ENCODE measurements at regions of chr2 and their contacts with region 1.

Region 1: DNA sequence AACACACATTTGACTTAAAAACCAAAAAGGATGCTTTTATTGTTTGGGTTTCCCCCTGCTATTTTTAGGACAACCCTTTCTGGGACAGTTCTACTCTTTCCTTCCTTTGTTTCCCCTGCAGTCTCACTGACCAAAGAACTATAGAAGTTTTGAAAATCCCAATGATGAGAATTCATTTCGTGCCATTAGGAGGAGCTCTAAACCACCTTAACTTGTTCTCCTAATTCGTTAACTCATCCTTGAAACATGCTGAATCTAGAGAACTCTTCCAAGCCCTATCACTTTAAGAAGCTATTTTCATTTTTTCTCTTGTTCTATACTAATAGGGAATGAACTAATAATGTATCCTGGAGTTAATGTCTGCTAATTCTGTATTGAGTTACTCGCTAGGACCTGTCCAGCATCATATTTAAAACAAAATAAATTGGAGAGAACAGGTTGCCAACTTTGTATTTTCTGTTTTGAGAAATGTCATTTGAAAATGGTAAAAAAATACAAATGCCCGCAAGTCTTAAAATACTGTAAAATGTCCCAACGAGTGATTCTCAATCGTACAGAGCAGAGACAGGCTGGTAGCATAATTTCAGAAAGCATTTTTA is 62.9 kb downstream of the AFTPH start:
- DNase-seq: no peak
- ATAC-seq: peak; percentile 30
- H3K4me3 ChIP-seq: no peak overlapping the region
- H3K27ac ChIP-seq: no peak overlapping the region
- H3K4me1 ChIP-seq: peaks cover 40% of the 10 kb centered on the region
- H3K27me3 ChIP-seq: no peaks in the 10 kb centered on the region
- CTCF ChIP-seq: peak; percentile 54 to 77 (median 63)
- EP300 ChIP-seq: no peak
- POLR2A ChIP-seq: no peak
- RAD21 ChIP-seq: peak; percentile 83

Region 2: GRCh38 chr2:64533882-64534281 is 53.1 kb before region 1 on chr2:
- CTCF ChIA-PET with region 1: interaction called, 12 read pairs
- POLR2A ChIA-PET with region 1: interaction called, 5 read pairs
- RAD21 ChIA-PET with region 1: interaction called, 16 read pairs
- SMC1A ChIA-PET with region 1: interaction called, 9 read pairs
- in situ Hi-C with region 1: no loop called
- intact Hi-C with region 1: no loop called
- DNase-seq: no peak
- ATAC-seq: peak; percentile 13
- H3K4me3 ChIP-seq: peak overlapping the region; percentile 38; the same call in 1 of the 2 replicates
- H3K27ac ChIP-seq: peak overlapping the region; percentile 17; the same call in 1 of the 2 replicates
- H3K4me1 ChIP-seq: peaks cover 35% of the 10 kb centered on the region
- H3K27me3 ChIP-seq: no peaks in the 10 kb centered on the region
- CTCF ChIP-seq: no peak
- EP300 ChIP-seq: no peak
- POLR2A ChIP-seq: no peak
- RAD21 ChIP-seq: no peak

Region 3: DNA sequence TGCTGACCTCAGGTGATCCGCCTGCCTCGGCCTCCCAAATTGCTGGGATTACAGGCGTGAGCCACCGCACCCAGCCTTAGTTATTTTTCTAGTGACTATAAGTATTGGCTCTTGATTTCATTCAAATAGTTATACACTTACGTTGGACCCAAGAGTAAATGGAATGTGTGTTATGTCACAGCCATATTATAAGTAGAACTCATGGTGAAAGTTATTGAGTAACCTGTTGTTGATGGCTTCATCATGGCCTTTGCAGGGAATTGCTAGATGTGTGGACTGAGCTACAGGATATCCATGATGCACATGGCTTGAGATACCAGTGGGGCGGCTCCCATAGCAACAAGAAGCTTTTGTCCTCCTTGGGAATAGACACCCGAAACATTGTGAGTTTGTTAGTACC is 18.1 kb before region 1 on chr2:
- CTCF ChIA-PET with region 1: interaction called, 13 read pairs
- POLR2A ChIA-PET with region 1: interaction called, 3 read pairs
- RAD21 ChIA-PET with region 1: interaction called, 7 read pairs
- SMC1A ChIA-PET with region 1: interaction called, 16 read pairs
- in situ Hi-C with region 1: no loop called
- intact Hi-C with region 1: no loop called
- DNase-seq: no peak
- ATAC-seq: no peak
- H3K4me3 ChIP-seq: no peak overlapping the region
- H3K27ac ChIP-seq: no peak overlapping the region
- H3K4me1 ChIP-seq: no peaks in the 10 kb centered on the region; the same call in 1 of the 2 replicates
- H3K27me3 ChIP-seq: no peaks in the 10 kb centered on the region
- CTCF ChIP-seq: no peak
- EP300 ChIP-seq: no peak
- POLR2A ChIP-seq: no peak
- RAD21 ChIP-seq: no peak

Region 4: GRCh38 chr2:64617631-64618151 is 30.7 kb after region 1 on chr2:
- CTCF ChIA-PET with region 1: interaction called, 7 read pairs
- POLR2A ChIA-PET with region 1: interaction called, 4 read pairs
- RAD21 ChIA-PET with region 1: interaction called, 5 read pairs
- SMC1A ChIA-PET with region 1: interaction called, 18 read pairs
- in situ Hi-C with region 1: no loop called
- intact Hi-C with region 1: no loop called
- DNase-seq: no peak
- ATAC-seq: no peak
- H3K4me3 ChIP-seq: no peak overlapping the region
- H3K27ac ChIP-seq: no peak overlapping the region
- H3K4me1 ChIP-seq: peaks cover 11% of the 10 kb centered on the region
- H3K27me3 ChIP-seq: no peaks in the 10 kb centered on the region
- CTCF ChIP-seq: no peak
- EP300 ChIP-seq: no peak
- POLR2A ChIP-seq: no peak
- RAD21 ChIP-seq: no peak

Region 5: GRCh38 chr2:64865073-64865830 is 278.3 kb after region 1 on chr2:
- CTCF ChIA-PET with region 1: interaction called, 30 read pairs
- POLR2A ChIA-PET with region 1: interaction called, 4 read pairs
- RAD21 ChIA-PET with region 1: interaction called, 19 read pairs
- SMC1A ChIA-PET with region 1: interaction called, 50 read pairs
- in situ Hi-C with region 1: loop called (anchors 10 kb)
- intact Hi-C with region 1: loop called (anchors 1 kb)
- DNase-seq: no peak
- ATAC-seq: peak; percentile 84
- H3K4me3 ChIP-seq: peak overlapping the region; percentile 82
- H3K27ac ChIP-seq: peak overlapping the region; percentile 70
- H3K4me1 ChIP-seq: peaks cover 49% of the 10 kb centered on the region
- H3K27me3 ChIP-seq: no peaks in the 10 kb centered on the region
- CTCF ChIP-seq: peak; percentile 62 to 79 (median 64); a peak in 5 of 6 replicates
- EP300 ChIP-seq: no peak
- POLR2A ChIP-seq: no peak
- RAD21 ChIP-seq: peak; percentile 71

Measured in GM12878 (cell line).